Activated CD4-positive, alpha-beta T cell treated with anti-CD3 and anti-CD28 coated beads for 36 hours (primary cell): ENCODE measurements at regions of chr3 and their contacts with region 1.

Region 1: DNA sequence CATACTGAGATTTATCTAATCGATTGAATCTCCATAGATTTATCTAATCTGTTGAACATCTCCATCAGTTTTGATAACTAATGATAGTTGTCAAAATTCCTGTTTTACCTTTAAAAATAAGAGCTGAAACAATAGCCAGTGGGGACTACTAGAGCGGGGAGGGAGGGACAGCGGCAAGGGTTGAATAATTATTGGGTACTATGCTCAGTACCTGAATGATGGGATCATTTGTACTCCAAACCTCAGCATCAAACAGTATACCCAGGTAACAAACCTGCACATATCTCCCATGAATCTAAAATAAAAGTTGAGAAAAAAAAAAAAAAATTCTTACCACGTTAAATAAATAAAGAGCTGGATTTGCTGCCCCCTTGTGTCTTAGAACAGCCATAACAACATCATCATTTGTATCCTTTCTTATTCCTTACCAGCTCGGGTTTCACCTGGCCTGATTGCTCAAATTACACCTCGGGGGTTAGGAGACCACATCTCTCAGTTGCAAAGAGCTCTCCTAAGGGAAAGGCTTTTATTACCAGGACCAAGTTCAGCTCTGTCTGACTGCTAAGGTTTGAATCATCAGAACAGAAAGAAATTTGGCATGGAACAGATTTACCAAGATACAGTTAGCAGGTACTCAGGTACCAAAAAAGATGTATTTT is 25.7 kb upstream of the RPL39L start:
- DNase-seq: peak; percentile 36
- ATAC-seq: peak; percentile 70
- H3K4me3 Mint-ChIP-seq: no peak overlapping the region
- H3K27ac Mint-ChIP-seq: no peak overlapping the region
- H3K4me1 Mint-ChIP-seq: peaks cover 2% of the 10 kb centered on the region
- H3K27me3 Mint-ChIP-seq: no peaks in the 10 kb centered on the region

Region 2: GRCh38 chr3:186821429-186822367 is 343.3 kb before region 1 on chr3:
- CTCF ChIA-PET with region 1: interaction called, 24 read pairs
- POLR2A ChIA-PET with region 1: no interaction called
- intact Hi-C with region 1: no loop called
- DNase-seq: no peak
- ATAC-seq: no peak
- H3K4me3 Mint-ChIP-seq: no peak overlapping the region
- H3K27ac Mint-ChIP-seq: no peak overlapping the region
- H3K4me1 Mint-ChIP-seq: peaks cover 20% of the 10 kb centered on the region
- H3K27me3 Mint-ChIP-seq: peaks cover 5% of the 10 kb centered on the region

Region 3: DNA sequence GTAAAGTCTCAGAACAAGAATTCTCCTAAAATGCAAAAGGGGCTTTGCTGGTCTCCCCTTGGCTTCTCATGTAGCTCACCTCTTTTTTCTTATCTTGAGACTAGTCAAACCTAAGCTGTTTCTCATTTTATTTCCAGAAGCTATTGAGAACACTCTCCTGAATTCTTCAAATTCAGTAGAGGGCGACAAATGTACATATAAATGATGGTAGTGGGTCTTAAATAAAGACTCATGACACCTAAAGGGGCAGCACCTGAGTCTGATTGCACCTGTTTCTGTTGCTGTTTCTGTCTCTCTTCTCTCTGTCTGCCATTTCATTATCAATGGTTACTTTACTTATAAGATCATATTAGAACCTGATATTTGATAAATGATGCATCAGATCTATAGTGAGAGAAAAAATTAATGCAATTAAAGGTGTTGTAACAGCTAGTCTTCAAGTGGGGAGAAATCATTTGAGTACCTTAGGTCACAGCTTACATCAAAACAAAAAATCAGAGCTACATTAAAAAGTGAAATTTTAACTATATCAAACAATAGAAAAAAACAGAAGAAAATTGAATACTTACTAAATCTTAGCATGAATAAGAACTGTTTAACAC is 315.5 kb before region 1 on chr3:
- CTCF ChIA-PET with region 1: interaction called, 69 read pairs
- POLR2A ChIA-PET with region 1: no interaction called
- intact Hi-C with region 1: loop called (anchors 1 kb)
- DNase-seq: peak; percentile 32
- ATAC-seq: peak; percentile 90
- H3K4me3 Mint-ChIP-seq: no peak overlapping the region
- H3K27ac Mint-ChIP-seq: peak overlapping the region; percentile 52
- H3K4me1 Mint-ChIP-seq: peaks cover 18% of the 10 kb centered on the region
- H3K27me3 Mint-ChIP-seq: peaks cover 7% of the 10 kb centered on the region

Region 4: GRCh38 chr3:187101184-187102072 is 63.6 kb before region 1 on chr3:
- CTCF ChIA-PET with region 1: interaction called, 14 read pairs
- POLR2A ChIA-PET with region 1: no interaction called
- intact Hi-C with region 1: no loop called
- DNase-seq: peak; percentile 67
- ATAC-seq: peak; percentile 70
- H3K4me3 Mint-ChIP-seq: peak overlapping the region; percentile 20
- H3K27ac Mint-ChIP-seq: peak overlapping the region; percentile 62
- H3K4me1 Mint-ChIP-seq: peaks cover 32% of the 10 kb centered on the region
- H3K27me3 Mint-ChIP-seq: no peaks in the 10 kb centered on the region

Region 5: GRCh38 chr3:187150599-187150998 is 14.4 kb before region 1 on chr3:
- CTCF ChIA-PET with region 1: interaction called, 33 read pairs
- POLR2A ChIA-PET with region 1: no interaction called
- intact Hi-C with region 1: no loop called
- DNase-seq: peak; percentile 82
- ATAC-seq: peak; percentile 86
- H3K4me3 Mint-ChIP-seq: no peak overlapping the region
- H3K27ac Mint-ChIP-seq: no peak overlapping the region
- H3K4me1 Mint-ChIP-seq: peaks cover 5% of the 10 kb centered on the region
- H3K27me3 Mint-ChIP-seq: peaks cover 2% of the 10 kb centered on the region

Region 6: GRCh38 chr3:187706971-187707370 is 542.0 kb after region 1 on chr3:
- CTCF ChIA-PET with region 1: no interaction called
- POLR2A ChIA-PET with region 1: no interaction called
- intact Hi-C with region 1: no loop called
- DNase-seq: no peak
- ATAC-seq: no peak
- H3K4me3 Mint-ChIP-seq: no peak overlapping the region
- H3K27ac Mint-ChIP-seq: no peak overlapping the region
- H3K4me1 Mint-ChIP-seq: no peaks in the 10 kb centered on the region
- H3K27me3 Mint-ChIP-seq: no peaks in the 10 kb centered on the region